Naive thymus-derived CD4-positive, alpha-beta T cell (primary cell): ENCODE measurements at regions of chr2 and their contacts with region 1.

Region 1: DNA sequence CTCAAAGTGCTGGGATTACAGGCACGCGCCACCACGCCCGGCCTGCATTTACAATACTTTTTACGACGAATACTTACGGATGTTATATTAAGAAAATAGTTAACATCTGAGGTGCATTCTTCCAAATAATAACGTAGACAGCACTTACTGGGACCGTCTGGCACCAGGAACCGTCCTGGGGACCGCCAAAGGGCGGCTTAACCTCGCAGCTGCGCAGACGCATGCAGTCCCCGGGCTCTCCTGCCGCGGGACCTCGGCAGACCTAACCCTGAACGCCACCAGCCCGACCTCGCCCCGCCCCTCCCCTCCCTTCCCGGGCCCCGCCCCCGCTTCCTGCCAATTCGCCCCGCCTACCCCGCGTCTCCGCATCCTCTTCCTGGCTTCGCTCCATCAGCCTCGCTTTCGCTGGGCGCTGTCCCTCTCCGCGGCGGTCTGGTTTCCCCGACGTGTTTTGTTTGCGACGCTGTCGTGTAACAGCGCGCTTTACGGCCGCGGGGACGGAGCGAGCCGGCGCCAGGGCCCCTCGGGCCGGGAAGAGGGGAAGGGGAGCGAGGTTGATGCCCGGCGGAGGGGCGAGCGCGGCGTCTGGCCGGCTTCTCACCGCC is at the start of gene CNOT11:
- DNase-seq: peak; percentile 97 to 99 (median 98)
- ATAC-seq: peak; percentile 89
- H3K4me3 ChIP-seq: peak within 1 kb of the TSS; percentile 91
- H3K4me3 Mint-ChIP-seq: peak within 1 kb of the TSS; percentile 91 to 98 (median 96)
- H3K27ac ChIP-seq: peak within 1 kb of the TSS; percentile 99
- H3K27ac Mint-ChIP-seq: peak within 1 kb of the TSS; percentile 92 to 98 (median 96)
- H3K4me1 ChIP-seq: peaks cover 28 to 39% of the 10 kb centered on the region in 2 donors
- H3K4me1 Mint-ChIP-seq: peaks cover 27 to 58% (median 51%) of the 10 kb centered on the region in 7 donors
- H3K27me3 ChIP-seq: no peaks in the 10 kb centered on the region
- H3K27me3 Mint-ChIP-seq: no peaks in the 10 kb centered on the region
- total RNA-seq, gene CNOT11: 49.0 to 65.7 (median 54.3) TPM

Region 2: DNA sequence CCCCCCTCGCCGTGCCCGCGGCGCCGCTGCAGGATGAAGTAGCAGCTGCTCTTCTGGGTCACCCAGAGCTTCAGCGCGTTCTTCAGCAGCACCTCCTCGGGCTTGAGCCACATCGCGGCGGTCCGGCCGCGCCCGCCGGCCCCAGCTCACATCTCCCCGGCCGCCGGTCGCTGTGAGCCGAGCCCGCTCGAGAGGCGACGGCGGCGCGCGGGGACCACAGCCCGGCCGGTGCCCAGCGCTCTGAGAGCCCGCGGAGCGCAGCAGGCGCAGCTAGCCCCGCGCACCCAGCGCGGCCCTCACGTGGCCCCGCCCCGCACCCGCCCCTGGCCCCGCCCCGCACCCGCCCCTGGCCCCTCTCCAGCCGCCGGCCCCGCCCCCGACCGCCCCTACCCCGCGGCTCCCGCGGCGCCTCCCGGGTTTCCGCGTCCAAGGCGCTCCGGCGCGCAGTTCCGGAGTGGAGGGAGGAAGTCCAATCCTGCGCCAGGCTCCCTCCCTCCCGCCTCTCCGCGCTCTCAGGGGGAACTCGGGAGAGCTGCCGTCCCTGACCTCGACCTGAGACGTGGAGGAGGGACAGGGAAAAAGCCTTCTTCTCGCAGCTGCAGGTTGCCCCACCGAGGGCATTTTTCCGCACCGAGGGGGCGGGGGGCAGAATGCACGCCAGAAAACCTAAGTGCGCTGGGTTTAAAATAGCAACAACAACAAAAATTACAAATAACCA is 101.2 kb before region 1 on chr2 and contains the start of gene TBC1D8:
- CTCF ChIA-PET with region 1: no interaction called
- POLR2A ChIA-PET with region 1: no interaction called
- intact Hi-C with region 1: loop called (anchors 1 to 2 kb)
- DNase-seq: peak; percentile 19 to 79 (median 47)
- ATAC-seq: peak; percentile 89
- H3K4me3 ChIP-seq: peak within 1 kb of the TSS; percentile 45
- H3K4me3 Mint-ChIP-seq: peak within 1 kb of the TSS; percentile 76 to 90 (median 86)
- H3K27ac ChIP-seq: no peak within 1 kb of the TSS
- H3K27ac Mint-ChIP-seq: peak within 1 kb of the TSS in 7 of 9 donors; percentile 14 to 79 (median 65)
- H3K4me1 ChIP-seq: peaks cover 8 to 19% of the 10 kb centered on the region in 2 donors
- H3K4me1 Mint-ChIP-seq: peaks cover 14 to 36% (median 25%) of the 10 kb centered on the region in 7 donors
- H3K27me3 ChIP-seq: peaks cover 0 to 4% of the 10 kb centered on the region in 2 donors
- H3K27me3 Mint-ChIP-seq: peaks cover 0 to 75% (median 16%) of the 10 kb centered on the region in 5 donors
- total RNA-seq, gene TBC1D8: 0.87 to 20.1 (median 2.4) TPM

Region 3: DNA sequence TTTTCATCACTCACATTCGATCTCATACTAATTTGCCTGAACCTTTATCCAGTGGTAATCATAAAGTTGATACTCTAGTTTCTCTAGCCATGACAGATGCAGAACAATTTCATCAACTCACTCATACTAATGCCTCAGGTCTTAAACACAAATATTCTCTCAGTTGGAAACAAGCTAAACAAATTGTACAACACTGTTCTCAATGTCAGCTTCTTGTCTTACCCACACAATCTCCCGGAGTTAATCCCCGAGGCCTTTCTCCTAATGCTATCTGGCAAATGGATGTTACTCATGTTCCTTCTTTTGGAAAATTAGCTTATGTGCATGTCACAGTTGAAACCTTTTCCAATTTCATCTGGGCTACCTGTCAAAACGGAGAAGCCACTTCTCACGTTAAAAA is 11.4 kb before region 1 on chr2:
- CTCF ChIA-PET with region 1: interaction called, 3 read pairs
- POLR2A ChIA-PET with region 1: interaction called, 3 read pairs
- intact Hi-C with region 1: loop called in 1 of 2 experiments (anchors 1 kb)
- DNase-seq: no peak
- ATAC-seq: no peak
- H3K4me3 ChIP-seq: no peak overlapping the region
- H3K4me3 Mint-ChIP-seq: no peak overlapping the region
- H3K27ac ChIP-seq: no peak overlapping the region
- H3K27ac Mint-ChIP-seq: no peak overlapping the region
- H3K4me1 ChIP-seq: no peaks in the 10 kb centered on the region
- H3K4me1 Mint-ChIP-seq: peaks cover 0 to 13% (median 5%) of the 10 kb centered on the region in 7 donors
- H3K27me3 ChIP-seq: no peaks in the 10 kb centered on the region
- H3K27me3 Mint-ChIP-seq: peaks cover 0 to 6% (median 0%) of the 10 kb centered on the region in 5 donors

Region 4: GRCh38 chr2:101291973-101292372 is 39.5 kb after region 1 on chr2:
- CTCF ChIA-PET with region 1: no interaction called
- POLR2A ChIA-PET with region 1: no interaction called
- intact Hi-C with region 1: no loop called
- DNase-seq: no peak
- ATAC-seq: no peak
- H3K4me3 ChIP-seq: no peak overlapping the region
- H3K4me3 Mint-ChIP-seq: no peak overlapping the region
- H3K27ac ChIP-seq: no peak overlapping the region
- H3K27ac Mint-ChIP-seq: peak overlapping the region in 1 of 9 donors; percentile 8
- H3K4me1 ChIP-seq: peaks cover 11 to 15% of the 10 kb centered on the region in 2 donors
- H3K4me1 Mint-ChIP-seq: peaks cover 18 to 67% (median 46%) of the 10 kb centered on the region in 7 donors
- H3K27me3 ChIP-seq: no peaks in the 10 kb centered on the region
- H3K27me3 Mint-ChIP-seq: no peaks in the 10 kb centered on the region

Region 5: DNA sequence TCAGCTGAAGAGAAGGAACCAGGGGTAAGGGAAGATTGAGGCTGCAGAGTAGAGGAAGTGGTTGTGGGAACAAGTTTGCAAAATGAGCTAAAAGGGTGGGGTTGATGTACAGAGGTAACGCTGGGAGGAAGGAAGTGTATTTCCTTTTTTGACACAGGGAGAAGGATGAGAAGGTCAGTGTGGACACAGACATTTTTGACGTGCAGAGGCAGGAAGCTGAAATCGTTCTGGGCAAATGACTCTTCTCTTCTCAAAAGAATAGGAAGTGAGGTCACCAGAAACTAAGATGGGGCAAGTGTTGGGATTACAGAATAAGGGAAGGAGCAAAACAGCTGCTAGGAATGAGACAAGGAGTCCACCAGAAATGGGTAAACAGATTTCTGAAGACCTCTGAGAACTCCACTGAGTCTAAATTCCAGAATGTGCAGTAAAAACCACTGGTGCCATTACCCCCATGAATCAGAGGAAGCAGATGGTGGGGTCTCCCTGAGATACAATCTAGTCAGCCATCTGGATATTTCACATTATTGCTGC is 76.0 kb after region 1 on chr2:
- CTCF ChIA-PET with region 1: no interaction called
- POLR2A ChIA-PET with region 1: interaction called, 12 read pairs
- intact Hi-C with region 1: loop called (anchors 2 kb)
- DNase-seq: peak in 7 of 9 donors; percentile 43 to 84 (median 81)
- ATAC-seq: peak; percentile 94
- H3K4me3 ChIP-seq: peak overlapping the region; percentile 43
- H3K4me3 Mint-ChIP-seq: no peak overlapping the region
- H3K27ac ChIP-seq: peak overlapping the region; percentile 49
- H3K27ac Mint-ChIP-seq: no peak overlapping the region
- H3K4me1 ChIP-seq: peaks cover 34 to 60% of the 10 kb centered on the region in 2 donors
- H3K4me1 Mint-ChIP-seq: peaks cover 8 to 29% (median 23%) of the 10 kb centered on the region in 7 donors
- H3K27me3 ChIP-seq: no peaks in the 10 kb centered on the region
- H3K27me3 Mint-ChIP-seq: no peaks in the 10 kb centered on the region

Region 6: DNA sequence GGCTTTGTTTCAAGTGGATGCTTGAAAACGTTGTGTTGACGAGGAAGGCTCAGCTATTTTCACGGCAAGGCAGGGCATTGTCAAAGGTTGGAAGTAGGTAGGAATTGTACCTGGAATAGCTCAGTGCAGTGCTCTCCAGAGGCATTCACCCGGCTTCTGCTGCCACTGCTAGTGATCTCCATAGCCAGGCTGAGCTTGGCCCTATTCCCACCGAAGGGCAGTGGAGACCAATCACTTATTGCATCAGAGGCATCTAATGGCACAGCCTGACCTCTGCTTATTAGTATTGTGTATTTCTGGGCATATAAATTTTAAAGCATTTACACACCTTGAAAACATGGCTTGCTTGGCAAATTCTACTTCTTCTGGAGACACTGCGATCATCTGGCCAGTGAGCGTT is 102.4 kb after region 1 on chr2:
- CTCF ChIA-PET with region 1: no interaction called
- POLR2A ChIA-PET with region 1: no interaction called
- intact Hi-C with region 1: no loop called
- DNase-seq: no peak
- ATAC-seq: no peak
- H3K4me3 ChIP-seq: no peak overlapping the region
- H3K4me3 Mint-ChIP-seq: no peak overlapping the region
- H3K27ac ChIP-seq: no peak overlapping the region
- H3K27ac Mint-ChIP-seq: no peak overlapping the region
- H3K4me1 ChIP-seq: no peaks in the 10 kb centered on the region
- H3K4me1 Mint-ChIP-seq: peaks cover 1 to 25% (median 10%) of the 10 kb centered on the region in 7 donors
- H3K27me3 ChIP-seq: no peaks in the 10 kb centered on the region
- H3K27me3 Mint-ChIP-seq: peaks cover 0 to 16% (median 0%) of the 10 kb centered on the region in 5 donors

Region 7: DNA sequence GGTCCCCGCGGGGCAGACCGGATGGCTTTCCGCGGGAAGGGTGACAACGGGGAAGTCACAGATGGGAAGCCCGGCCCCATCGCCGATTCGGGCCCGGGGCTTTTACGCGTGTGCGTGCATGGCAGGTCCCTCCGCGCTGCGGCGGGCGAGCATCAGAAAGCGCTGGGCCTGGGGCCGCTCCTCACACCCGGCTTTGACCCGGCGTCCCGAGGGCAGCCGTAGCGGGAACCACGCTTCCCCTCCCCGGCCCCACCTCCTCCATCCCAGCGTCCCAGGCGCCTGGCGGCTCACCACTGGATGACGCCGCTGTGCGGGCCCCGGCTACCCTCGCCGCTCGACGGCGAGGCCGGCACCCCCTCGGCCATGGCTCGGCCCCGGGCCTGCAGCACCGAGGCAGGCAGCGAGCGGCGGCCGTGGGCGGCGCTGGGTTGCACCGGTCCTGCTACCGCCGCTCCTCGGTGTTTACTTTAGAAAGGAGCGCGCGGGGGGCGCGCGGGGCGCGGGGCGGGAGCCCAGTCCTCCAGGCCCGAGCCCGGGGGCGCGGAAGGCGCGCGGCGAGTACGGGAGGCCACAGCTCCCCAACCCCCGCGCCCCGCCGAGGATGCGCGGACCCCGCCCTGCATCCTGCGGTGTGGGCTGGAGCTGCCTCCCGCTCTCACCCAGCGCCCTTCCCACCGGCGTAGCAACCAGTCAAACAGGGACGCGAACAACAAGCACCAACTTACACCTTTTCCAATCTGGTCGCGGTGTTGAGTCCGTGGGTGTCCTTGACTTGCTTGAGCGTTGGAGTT is 221.6 kb after region 1 on chr2:
- CTCF ChIA-PET with region 1: no interaction called
- POLR2A ChIA-PET with region 1: no interaction called
- intact Hi-C with region 1: loop called in 1 of 2 experiments (anchors 2 kb)
- DNase-seq: peak; percentile 7 to 70 (median 20)
- ATAC-seq: peak; percentile 46
- H3K4me3 ChIP-seq: peak overlapping the region; percentile 48
- H3K4me3 Mint-ChIP-seq: peak overlapping the region; percentile 81 to 90 (median 85)
- H3K27ac ChIP-seq: no peak overlapping the region
- H3K27ac Mint-ChIP-seq: peak overlapping the region in 5 of 9 donors; percentile 36 to 92 (median 73)
- H3K4me1 ChIP-seq: peaks cover 0 to 6% of the 10 kb centered on the region in 2 donors
- H3K4me1 Mint-ChIP-seq: peaks cover 6 to 50% (median 11%) of the 10 kb centered on the region in 7 donors
- H3K27me3 ChIP-seq: no peaks in the 10 kb centered on the region
- H3K27me3 Mint-ChIP-seq: peaks cover 0 to 7% (median 0%) of the 10 kb centered on the region in 5 donors